ENCODE measurements at regions of chrX and their contacts with region 1.

Region 1: GRCh38 chrX:77910108-77910840 is at the start of gene ATP7A:
- DNase-seq: peak; percentile 91
- ATAC-seq: peak; percentile 99
- total RNA-seq, gene ATP7A: 6.9 to 8.6 TPM

Region 2: GRCh38 chrX:78029663-78030062 is 119.4 kb after region 1 on chrX:
- intact Hi-C with region 1: loop called in 1 of 2 experiments (anchors 10 kb)
- DNase-seq: no peak
- ATAC-seq: no peak

Measured in left cardiac atrium (tissue), 4 donors.